Activated CD4-positive, alpha-beta T cell treated with anti-CD3 and anti-CD28 coated beads, Interleukin-2, amount 10 ng/mL, durations not matched to agents 24 days and 14 days (primary cell): ENCODE measurements at regions of chr6 and their contacts with region 1.

Region 1: DNA sequence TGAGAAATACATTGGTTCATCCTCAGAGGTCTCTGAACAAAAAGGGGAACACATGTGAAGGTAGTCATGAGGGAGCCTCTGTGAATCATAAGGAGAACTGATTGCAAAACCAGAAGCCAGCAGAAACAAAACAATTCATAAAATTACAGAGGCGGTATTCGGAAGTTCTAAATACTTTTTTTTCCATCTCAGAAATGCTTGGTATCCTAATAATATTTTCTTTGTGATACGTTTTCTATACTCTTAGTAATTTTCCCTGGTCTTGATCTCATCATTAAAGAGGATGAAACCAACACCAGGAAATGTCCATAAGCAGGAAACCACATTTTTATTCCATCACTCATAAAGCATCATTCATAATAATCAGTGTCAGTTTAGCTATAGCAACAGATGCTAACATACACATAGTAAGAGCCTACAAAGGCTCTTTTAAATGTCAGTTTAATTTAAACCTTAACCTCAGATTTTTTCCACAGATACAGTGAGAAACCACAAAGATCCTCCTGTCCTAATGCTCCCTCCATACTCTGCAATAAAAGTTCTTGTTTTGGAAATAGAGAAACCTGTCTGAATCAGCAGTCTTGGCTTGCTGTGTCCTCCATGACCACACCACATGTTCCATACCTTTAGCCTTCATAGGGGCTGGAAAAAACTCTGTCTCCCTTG is 29.2 kb downstream of the SGK1 start:
- DNase-seq: peak; percentile 75
- H3K4me3 Mint-ChIP-seq: peak overlapping the region; percentile 74
- H3K27ac Mint-ChIP-seq: peak overlapping the region; percentile 96
- H3K4me1 Mint-ChIP-seq: peaks cover 20% of the 10 kb centered on the region
- H3K27me3 Mint-ChIP-seq: no peaks in the 10 kb centered on the region

Region 2: GRCh38 chr6:134235937-134236751 is 52.5 kb before region 1 on chr6:
- intact Hi-C with region 1: loop called (anchors 1 kb)
- DNase-seq: peak; percentile 69
- H3K4me3 Mint-ChIP-seq: peak overlapping the region; percentile 51
- H3K27ac Mint-ChIP-seq: peak overlapping the region; percentile 88
- H3K4me1 Mint-ChIP-seq: peaks cover 40% of the 10 kb centered on the region
- H3K27me3 Mint-ChIP-seq: no peaks in the 10 kb centered on the region

Region 3: GRCh38 chr6:134315974-134316441 is 27.3 kb after region 1 on chr6:
- intact Hi-C with region 1: loop called (anchors 2 kb)
- DNase-seq: peak; percentile 61
- H3K4me3 Mint-ChIP-seq: no peak overlapping the region
- H3K27ac Mint-ChIP-seq: no peak overlapping the region
- H3K4me1 Mint-ChIP-seq: peaks cover 27% of the 10 kb centered on the region
- H3K27me3 Mint-ChIP-seq: peaks cover 42% of the 10 kb centered on the region

Region 4: DNA sequence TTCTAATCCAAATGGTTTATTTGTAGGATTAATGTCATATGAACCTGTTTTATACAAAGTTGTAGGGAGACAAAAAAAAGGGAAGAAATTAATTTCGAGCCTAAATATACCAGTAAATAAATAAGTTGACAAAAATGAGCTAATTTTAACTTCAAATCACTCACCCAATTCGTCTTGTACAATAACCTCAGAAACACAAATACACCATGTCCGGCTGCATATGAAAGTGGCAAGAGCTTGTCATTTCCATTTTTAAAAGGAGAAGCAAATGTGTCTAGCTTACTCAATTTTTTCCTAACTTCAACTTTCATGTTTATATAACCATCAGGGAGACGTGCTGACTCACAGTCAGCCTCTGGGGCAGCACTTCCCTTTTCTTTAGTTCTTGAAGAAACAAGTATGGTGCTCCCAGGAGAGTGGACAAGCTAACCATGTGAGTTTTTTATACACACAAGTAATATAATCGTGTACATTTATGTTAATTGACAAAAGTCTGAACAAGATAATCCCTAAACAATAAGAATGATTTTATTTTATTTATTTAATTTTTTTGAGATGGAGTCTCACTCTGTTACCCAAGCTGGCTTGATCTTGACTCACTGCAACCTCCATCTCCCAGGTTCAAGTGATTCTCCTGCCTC is 84.7 kb after region 1 on chr6:
- intact Hi-C with region 1: loop called (anchors 2 kb)
- DNase-seq: peak; percentile 70
- H3K4me3 Mint-ChIP-seq: peak overlapping the region; percentile 27
- H3K27ac Mint-ChIP-seq: peak overlapping the region; percentile 73
- H3K4me1 Mint-ChIP-seq: peaks cover 36% of the 10 kb centered on the region
- H3K27me3 Mint-ChIP-seq: no peaks in the 10 kb centered on the region

Region 5: GRCh38 chr6:134436281-134436815 is 147.7 kb after region 1 on chr6:
- intact Hi-C with region 1: loop called (anchors 1 kb)
- DNase-seq: peak; percentile 90
- H3K4me3 Mint-ChIP-seq: peak overlapping the region; percentile 73
- H3K27ac Mint-ChIP-seq: peak overlapping the region; percentile 94
- H3K4me1 Mint-ChIP-seq: peaks cover 37% of the 10 kb centered on the region
- H3K27me3 Mint-ChIP-seq: no peaks in the 10 kb centered on the region

Region 6: DNA sequence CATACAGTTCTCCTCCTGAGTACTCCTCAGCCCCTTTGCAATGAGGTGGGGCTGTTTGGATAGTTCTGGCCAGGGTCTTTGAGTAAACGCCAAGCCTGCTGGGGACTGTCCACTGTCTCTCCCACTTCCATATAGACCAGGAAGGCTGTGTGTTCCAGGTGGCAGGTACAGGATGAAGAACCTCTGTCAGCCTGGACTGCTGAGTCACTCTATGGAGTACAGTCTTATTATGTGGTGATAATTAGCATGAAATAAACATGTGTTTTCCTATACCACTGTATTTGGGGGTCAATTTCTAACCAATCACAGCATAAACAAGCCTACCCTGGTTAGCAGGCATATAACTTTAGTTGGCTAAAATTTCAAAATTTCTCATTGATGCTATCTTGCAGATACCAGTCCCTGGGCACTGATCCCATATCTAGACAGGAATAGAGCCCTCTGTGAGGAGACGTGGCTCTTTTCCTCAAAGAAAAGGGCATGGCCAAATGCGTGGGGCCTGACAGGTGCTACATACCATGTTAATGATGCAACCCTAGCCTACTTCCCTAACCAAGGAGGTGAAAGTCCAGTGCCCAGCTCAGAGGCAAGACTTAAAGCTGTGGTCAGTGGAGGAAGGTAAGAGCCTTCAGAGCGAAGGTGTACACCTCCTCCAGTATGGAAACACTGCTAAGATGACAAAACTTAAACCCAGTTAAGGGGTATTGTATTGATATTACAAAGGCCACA is 665.8 kb after region 1 on chr6:
- intact Hi-C with region 1: loop called (anchors 10 kb)
- DNase-seq: no peak
- H3K4me3 Mint-ChIP-seq: no peak overlapping the region
- H3K27ac Mint-ChIP-seq: no peak overlapping the region
- H3K4me1 Mint-ChIP-seq: peaks cover 13% of the 10 kb centered on the region
- H3K27me3 Mint-ChIP-seq: no peaks in the 10 kb centered on the region